HepG2 (cell line): ENCODE measurements at regions of chr22 and their contacts with region 1.

Region 1: DNA sequence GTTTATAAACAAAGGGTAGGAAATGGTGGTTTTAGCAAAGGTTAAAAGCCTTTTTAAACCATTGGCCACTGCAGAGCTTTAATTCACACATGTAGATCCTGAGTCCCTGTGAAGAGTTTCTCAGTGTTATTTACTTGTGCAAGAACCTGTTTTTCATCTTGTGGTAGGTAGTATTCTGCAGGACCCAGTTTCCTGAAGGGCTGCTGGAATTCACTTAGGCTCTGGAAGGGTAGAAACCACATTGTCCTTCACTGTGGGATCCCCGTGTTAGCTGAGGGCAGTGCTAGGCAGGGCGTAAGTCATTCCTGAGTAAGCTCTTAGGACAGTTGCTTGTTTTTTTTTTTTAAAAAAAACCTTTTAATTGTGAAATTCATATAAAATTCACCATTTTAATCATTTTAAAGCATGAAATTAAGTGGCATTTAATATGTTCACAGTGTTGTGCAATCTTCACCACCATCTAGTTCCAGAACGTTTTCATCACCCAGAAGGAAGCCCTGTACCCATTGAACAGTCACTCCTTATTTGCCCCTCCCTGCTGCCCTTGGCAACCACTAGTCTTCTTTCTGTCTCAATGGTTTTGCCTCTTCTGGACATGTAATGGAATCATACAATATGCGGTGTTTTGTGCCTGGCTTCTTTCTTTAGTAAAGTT is 77.7 kb downstream of the C22orf31 start:
- DNase-seq: no peak
- ATAC-seq: no peak
- H3K4me3 ChIP-seq: no peak overlapping the region
- H3K27ac ChIP-seq: peak overlapping the region; percentile 87
- H3K4me1 ChIP-seq: peaks cover 99% of the 10 kb centered on the region
- H3K27me3 ChIP-seq: no peaks in the 10 kb centered on the region
- CTCF ChIP-seq: no peak
- EP300 ChIP-seq: no peak
- POLR2A ChIP-seq: no peak
- RAD21 ChIP-seq: no peak

Region 2: DNA sequence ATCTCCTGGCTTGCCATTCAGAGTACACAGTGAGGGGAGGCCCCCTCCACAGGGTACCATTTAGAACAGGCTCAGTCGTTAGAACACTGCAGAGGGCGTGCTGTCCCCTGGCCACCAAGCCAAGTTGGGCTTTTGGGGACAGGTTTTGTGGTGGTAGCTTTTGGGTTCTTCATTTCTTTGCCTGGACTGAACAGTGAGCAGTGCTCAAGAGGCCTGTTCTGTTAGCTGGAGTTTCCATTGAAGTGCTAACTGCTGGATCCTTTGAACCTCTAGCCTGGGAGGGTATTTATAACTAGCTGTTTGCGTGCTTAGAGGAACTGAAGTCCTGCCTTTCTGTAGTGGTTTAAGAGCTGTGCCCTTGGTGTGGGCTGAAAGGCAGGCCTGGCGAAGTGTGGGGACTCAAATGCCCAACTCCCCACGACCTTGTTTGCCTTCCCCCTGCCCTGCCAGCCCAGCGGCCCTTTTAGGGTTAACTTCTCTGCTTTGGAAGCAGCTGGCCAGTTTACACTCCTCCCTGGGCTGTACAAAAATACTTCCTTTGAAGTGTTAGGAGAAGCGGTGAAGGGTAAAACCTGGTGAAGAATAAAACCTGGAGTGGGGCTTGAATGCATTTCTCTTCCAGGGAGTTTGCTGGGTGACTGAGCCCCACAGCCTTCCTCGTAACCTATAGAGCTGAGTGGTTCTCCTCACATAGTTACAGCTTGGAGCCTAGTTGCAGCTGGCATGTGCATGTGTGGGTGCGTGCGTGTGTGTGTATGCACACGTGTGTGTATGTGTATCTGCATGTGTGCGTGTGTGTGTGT is 66.0 kb before region 1 on chr22:
- CTCF ChIA-PET with region 1: no interaction called
- POLR2A ChIA-PET with region 1: interaction called, 12 read pairs
- in situ Hi-C with region 1: no loop called
- intact Hi-C with region 1: no loop called
- DNase-seq: peak; percentile 86
- ATAC-seq: peak; percentile 72
- H3K4me3 ChIP-seq: peak overlapping the region in 1 of 3 experiments; percentile 44; a peak in 2 of 6 replicates
- H3K27ac ChIP-seq: peak overlapping the region; percentile 81
- H3K4me1 ChIP-seq: peaks cover 100% of the 10 kb centered on the region
- H3K27me3 ChIP-seq: no peaks in the 10 kb centered on the region
- CTCF ChIP-seq: peak; percentile 23; the same call in 1 of the 2 replicates
- EP300 ChIP-seq: peak in 1 of 2 experiments; percentile 91; a peak in 2 of 4 replicates
- POLR2A ChIP-seq: 0 out of 4 replicates have a peak, but pooled peaks of 1 of the 2 experiments have one; percentile 18
- RAD21 ChIP-seq: 0 out of 2 replicates have a peak, but pooled peaks have one; percentile 37

Region 3: GRCh38 chr22:28923826-28924732 is 59.8 kb before region 1 on chr22:
- CTCF ChIA-PET with region 1: no interaction called
- POLR2A ChIA-PET with region 1: interaction called, 12 read pairs
- in situ Hi-C with region 1: no loop called
- intact Hi-C with region 1: no loop called
- DNase-seq: peak; percentile 98
- ATAC-seq: peak; percentile 76
- H3K4me3 ChIP-seq: peak overlapping the region in 1 of 3 experiments; percentile 29; a peak in 2 of 6 replicates
- H3K27ac ChIP-seq: peak overlapping the region; percentile 96
- H3K4me1 ChIP-seq: peaks cover 99% of the 10 kb centered on the region
- H3K27me3 ChIP-seq: no peaks in the 10 kb centered on the region
- CTCF ChIP-seq: no peak
- EP300 ChIP-seq: peak; percentile 67 to 98; a peak in 3 of 4 replicates
- POLR2A ChIP-seq: no peak
- RAD21 ChIP-seq: peak; percentile 48; the same call in 1 of the 2 replicates

Region 4: DNA sequence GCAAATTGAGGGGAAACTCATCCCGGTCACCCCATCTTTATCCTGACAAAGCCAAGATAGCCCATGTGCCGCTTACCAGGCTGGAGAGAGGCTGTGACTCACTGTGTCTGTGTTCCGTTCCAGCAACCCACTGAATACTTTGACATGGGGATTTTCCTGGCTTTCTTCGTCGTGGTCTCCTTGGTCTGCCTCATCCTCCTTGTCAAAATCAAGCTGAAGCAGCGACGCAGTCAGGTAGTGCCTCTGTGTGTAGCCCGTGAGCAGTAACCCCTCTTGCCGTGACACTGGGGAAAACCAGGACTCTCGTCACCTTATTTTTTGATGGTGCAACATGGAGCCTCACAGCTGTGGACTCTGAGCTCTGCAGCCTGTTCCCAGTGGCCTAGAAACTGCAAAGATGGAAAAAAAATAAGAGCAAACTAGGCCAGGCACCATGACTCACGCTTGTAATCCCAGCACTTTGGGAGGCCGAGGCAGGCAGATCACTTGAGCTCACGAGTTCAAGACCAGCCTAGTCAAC is 60.8 kb after region 1 on chr22:
- CTCF ChIA-PET with region 1: no interaction called
- POLR2A ChIA-PET with region 1: no interaction called
- in situ Hi-C with region 1: no loop called
- intact Hi-C with region 1: no loop called
- DNase-seq: peak; percentile 51
- ATAC-seq: peak; percentile 41
- H3K4me3 ChIP-seq: no peak overlapping the region
- H3K27ac ChIP-seq: peak overlapping the region; percentile 53
- H3K4me1 ChIP-seq: peaks cover 55% of the 10 kb centered on the region
- H3K27me3 ChIP-seq: no peaks in the 10 kb centered on the region
- CTCF ChIP-seq: no peak
- EP300 ChIP-seq: no peak
- POLR2A ChIP-seq: no peak
- RAD21 ChIP-seq: no peak